Activated B cell treated with CpG ODN at 0.5 μM for 24 hours (primary cell): ENCODE measurements at regions of chr6 and their contacts with region 1.

Region 1: GRCh38 chr6:137641474-137642077 is 147.4 kb upstream of the OLIG3 start:
- DNase-seq: peak; percentile 20
- ATAC-seq: peak; percentile 83
- H3K4me3 Mint-ChIP-seq: no peak overlapping the region
- H3K27ac Mint-ChIP-seq: no peak overlapping the region
- H3K4me1 Mint-ChIP-seq: peaks cover 12% of the 10 kb centered on the region
- H3K27me3 Mint-ChIP-seq: peaks cover 1% of the 10 kb centered on the region
- CTCF ChIP-seq: peak; percentile 58

Region 2: GRCh38 chr6:136607932-136608772 is 1033.4 kb before region 1 on chr6:
- CTCF ChIA-PET with region 1: no interaction called
- POLR2A ChIA-PET with region 1: no interaction called
- intact Hi-C with region 1: loop called (anchors 1 kb)
- DNase-seq: peak; percentile 53
- ATAC-seq: peak; percentile 99
- H3K4me3 Mint-ChIP-seq: no peak overlapping the region
- H3K27ac Mint-ChIP-seq: no peak overlapping the region
- H3K4me1 Mint-ChIP-seq: peaks cover 3% of the 10 kb centered on the region
- H3K27me3 Mint-ChIP-seq: no peaks in the 10 kb centered on the region
- CTCF ChIP-seq: peak; percentile 63

Region 3: DNA sequence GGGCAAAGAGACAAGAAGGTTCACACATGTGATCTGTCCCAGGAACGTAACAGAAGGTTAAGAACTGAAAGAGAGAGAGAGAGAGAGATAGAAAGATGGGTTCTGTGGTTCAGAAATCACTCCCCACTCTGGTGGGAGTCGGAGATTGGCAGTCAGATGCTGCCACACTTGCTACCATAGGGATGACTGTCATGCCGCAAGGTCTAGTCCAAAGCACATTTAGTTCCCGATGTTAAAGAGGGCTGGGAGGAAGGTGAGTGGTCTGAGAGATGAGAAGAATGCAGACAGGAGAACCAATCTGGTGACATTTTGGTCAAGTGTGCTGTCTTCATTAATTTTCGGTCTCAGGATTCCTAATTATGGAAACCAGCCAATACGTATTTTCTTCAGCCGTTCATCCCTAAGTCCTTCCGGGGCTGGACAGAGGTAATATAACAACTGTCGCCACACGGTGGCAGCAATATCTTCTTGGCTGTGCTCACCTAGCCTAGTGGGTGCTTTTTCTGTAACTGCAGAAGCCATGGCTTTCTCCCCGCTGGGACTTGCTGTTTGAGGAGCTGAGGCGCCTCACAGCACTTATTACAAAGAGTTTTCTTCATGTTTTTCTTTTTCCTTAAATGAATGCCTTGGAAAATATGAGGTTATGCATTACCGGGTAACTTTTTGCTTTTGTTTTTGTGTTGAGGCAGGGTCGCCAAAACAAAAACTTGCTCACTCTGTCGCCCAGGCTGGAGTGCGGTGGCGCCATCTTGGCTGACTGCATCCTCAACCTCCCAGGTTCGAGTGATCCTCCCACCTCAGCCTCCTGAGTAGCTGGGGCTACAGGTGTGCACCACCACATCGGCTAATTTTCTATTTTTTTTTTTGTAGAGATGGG is 673.5 kb before region 1 on chr6:
- CTCF ChIA-PET with region 1: interaction called, 4 read pairs
- POLR2A ChIA-PET with region 1: no interaction called
- intact Hi-C with region 1: loop called (anchors 1 kb)
- DNase-seq: peak; percentile 39
- ATAC-seq: peak; percentile 93
- H3K4me3 Mint-ChIP-seq: no peak overlapping the region
- H3K27ac Mint-ChIP-seq: no peak overlapping the region
- H3K4me1 Mint-ChIP-seq: peaks cover 4% of the 10 kb centered on the region
- H3K27me3 Mint-ChIP-seq: peaks cover 12% of the 10 kb centered on the region
- CTCF ChIP-seq: peak; percentile 22

Region 4: GRCh38 chr6:137271245-137272183 is 370.1 kb before region 1 on chr6:
- CTCF ChIA-PET with region 1: interaction called, 7 read pairs
- POLR2A ChIA-PET with region 1: no interaction called
- intact Hi-C with region 1: loop called (anchors 1 kb)
- DNase-seq: no peak
- ATAC-seq: peak; percentile 75
- H3K4me3 Mint-ChIP-seq: no peak overlapping the region
- H3K27ac Mint-ChIP-seq: no peak overlapping the region
- H3K4me1 Mint-ChIP-seq: peaks cover 20% of the 10 kb centered on the region
- H3K27me3 Mint-ChIP-seq: no peaks in the 10 kb centered on the region
- CTCF ChIP-seq: peak; percentile 61

Region 5: GRCh38 chr6:137415127-137415833 is 226.3 kb before region 1 on chr6:
- CTCF ChIA-PET with region 1: no interaction called
- POLR2A ChIA-PET with region 1: no interaction called
- intact Hi-C with region 1: loop called (anchors 1 kb)
- DNase-seq: peak; percentile 27
- ATAC-seq: peak; percentile 93
- H3K4me3 Mint-ChIP-seq: peak overlapping the region; percentile 84
- H3K27ac Mint-ChIP-seq: peak overlapping the region; percentile 61
- H3K4me1 Mint-ChIP-seq: peaks cover 11% of the 10 kb centered on the region
- H3K27me3 Mint-ChIP-seq: peaks cover 2% of the 10 kb centered on the region
- CTCF ChIP-seq: no peak

Region 6: DNA sequence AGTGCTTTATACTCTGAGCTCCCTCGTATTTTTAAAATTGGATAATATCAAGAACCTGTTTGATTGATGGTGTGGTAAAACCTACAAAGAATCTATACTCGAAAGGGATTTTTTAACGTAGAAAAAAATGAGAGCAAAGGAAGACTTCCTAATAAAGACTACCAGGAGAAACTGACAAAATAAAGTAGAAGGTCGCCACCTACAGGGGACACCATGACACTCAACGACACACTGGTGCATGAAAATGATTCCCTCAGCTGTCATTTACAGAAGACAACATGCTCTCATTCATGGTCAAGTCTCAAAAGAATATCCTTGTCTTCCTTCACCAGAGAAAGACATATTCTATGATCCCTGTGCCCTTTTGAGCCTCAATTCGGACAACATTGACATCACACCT is 867.8 kb after region 1 on chr6:
- CTCF ChIA-PET with region 1: no interaction called
- POLR2A ChIA-PET with region 1: no interaction called
- intact Hi-C with region 1: no loop called
- DNase-seq: no peak
- ATAC-seq: no peak
- H3K4me3 Mint-ChIP-seq: no peak overlapping the region
- H3K27ac Mint-ChIP-seq: no peak overlapping the region
- H3K4me1 Mint-ChIP-seq: peaks cover 2% of the 10 kb centered on the region
- H3K27me3 Mint-ChIP-seq: peaks cover 15% of the 10 kb centered on the region
- CTCF ChIP-seq: no peak